CD4-positive, alpha-beta T cell (primary cell): ENCODE measurements at regions of chr17 and their contacts with region 1.

Region 1: GRCh38 chr17:67733371-67733940 is 15.7 kb downstream of the NOL11 start:
- DNase-seq: no peak
- ATAC-seq: no peak
- H3K4me3 ChIP-seq: no peak overlapping the region
- H3K4me3 Mint-ChIP-seq: peak overlapping the region; percentile 0
- H3K27ac ChIP-seq: no peak overlapping the region
- H3K27ac Mint-ChIP-seq: peak overlapping the region; percentile 12
- H3K4me1 ChIP-seq: peaks cover 7% of the 10 kb centered on the region
- H3K4me1 Mint-ChIP-seq: peaks cover 27% of the 10 kb centered on the region
- H3K27me3 ChIP-seq: no peaks in the 10 kb centered on the region
- H3K27me3 Mint-ChIP-seq: no peaks in the 10 kb centered on the region
- CTCF ChIP-seq: no peak

Region 2: GRCh38 chr17:67520252-67520906 is 213.1 kb before region 1 on chr17:
- CTCF ChIA-PET with region 1: no interaction called
- POLR2A ChIA-PET with region 1: no interaction called
- intact Hi-C with region 1: no loop called
- DNase-seq: peak in 2 of 14 experiments; percentile 32 to 40
- ATAC-seq: no peak
- H3K4me3 ChIP-seq: no peak overlapping the region
- H3K4me3 Mint-ChIP-seq: no peak overlapping the region
- H3K27ac ChIP-seq: peak overlapping the region in 1 of 2 donors; percentile 23
- H3K27ac Mint-ChIP-seq: peak overlapping the region; percentile 75
- H3K4me1 ChIP-seq: peaks cover 22% of the 10 kb centered on the region
- H3K4me1 Mint-ChIP-seq: peaks cover 72% of the 10 kb centered on the region
- H3K27me3 ChIP-seq: no peaks in the 10 kb centered on the region
- H3K27me3 Mint-ChIP-seq: no peaks in the 10 kb centered on the region
- CTCF ChIP-seq: no peak

Region 3: DNA sequence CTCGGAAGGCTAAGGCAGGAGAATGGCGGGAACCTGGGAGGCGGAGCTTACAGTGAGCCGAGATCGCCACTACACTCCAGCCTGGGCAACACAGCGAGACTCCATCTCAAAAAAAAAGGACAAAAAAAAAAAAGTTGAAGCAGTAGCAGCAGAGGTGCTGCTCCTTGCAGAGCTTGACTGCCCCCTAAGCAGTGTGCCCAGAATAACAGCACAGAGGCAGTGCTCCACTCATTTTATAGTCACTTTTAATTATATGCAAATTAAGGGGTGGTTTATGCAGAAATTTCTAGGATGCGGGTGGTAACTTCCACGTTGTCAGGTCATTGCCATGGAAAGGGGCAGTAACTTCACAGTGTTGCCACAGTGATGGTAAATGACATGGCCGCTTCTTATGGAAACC is 70.0 kb before region 1 on chr17:
- CTCF ChIA-PET with region 1: no interaction called
- POLR2A ChIA-PET with region 1: no interaction called
- intact Hi-C with region 1: no loop called
- DNase-seq: no peak
- ATAC-seq: no peak
- H3K4me3 ChIP-seq: no peak overlapping the region
- H3K4me3 Mint-ChIP-seq: no peak overlapping the region
- H3K27ac ChIP-seq: no peak overlapping the region
- H3K27ac Mint-ChIP-seq: no peak overlapping the region
- H3K4me1 ChIP-seq: no peaks in the 10 kb centered on the region
- H3K4me1 Mint-ChIP-seq: peaks cover 12% of the 10 kb centered on the region
- H3K27me3 ChIP-seq: no peaks in the 10 kb centered on the region
- H3K27me3 Mint-ChIP-seq: no peaks in the 10 kb centered on the region
- CTCF ChIP-seq: no peak

Region 4: GRCh38 chr17:67912656-67913055 is 179.2 kb after region 1 on chr17:
- CTCF ChIA-PET with region 1: no interaction called
- POLR2A ChIA-PET with region 1: no interaction called
- intact Hi-C with region 1: loop called in 1 of 2 experiments (anchors 10 kb)
- DNase-seq: no peak
- ATAC-seq: no peak
- H3K4me3 ChIP-seq: no peak overlapping the region
- H3K4me3 Mint-ChIP-seq: no peak overlapping the region
- H3K27ac ChIP-seq: no peak overlapping the region
- H3K27ac Mint-ChIP-seq: peak overlapping the region; percentile 38
- H3K4me1 ChIP-seq: no peaks in the 10 kb centered on the region
- H3K4me1 Mint-ChIP-seq: peaks cover 21% of the 10 kb centered on the region
- H3K27me3 ChIP-seq: no peaks in the 10 kb centered on the region
- H3K27me3 Mint-ChIP-seq: no peaks in the 10 kb centered on the region
- CTCF ChIP-seq: no peak

Region 5: DNA sequence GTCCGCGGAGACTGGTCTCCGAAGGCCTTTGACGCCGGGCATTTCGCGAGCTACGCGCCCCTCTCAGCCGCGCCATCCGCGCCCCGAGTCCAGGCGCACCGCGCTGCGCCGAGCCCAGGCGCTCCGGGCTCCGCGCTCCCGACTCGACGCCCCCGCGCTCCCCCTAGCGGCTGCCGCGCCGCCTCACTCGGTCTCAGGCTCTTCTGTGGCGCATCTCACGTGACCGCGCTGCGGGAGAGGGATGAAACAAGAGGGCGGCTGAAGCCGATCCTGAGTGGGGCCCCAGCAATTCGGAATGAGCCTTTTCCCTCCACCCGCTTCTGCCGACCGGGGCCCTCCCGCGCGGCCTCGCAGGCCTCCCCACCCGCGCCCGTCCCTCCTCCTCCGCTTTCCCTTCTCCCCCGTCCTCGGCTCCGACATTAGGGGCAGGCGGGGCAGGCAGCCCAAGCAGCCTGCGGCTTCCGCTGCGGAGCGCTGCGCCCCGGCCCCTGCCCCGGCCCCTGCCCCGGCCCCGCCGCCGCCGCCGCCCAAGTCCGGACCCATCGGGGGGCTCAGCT is 471.9 kb after region 1 on chr17:
- CTCF ChIA-PET with region 1: no interaction called
- POLR2A ChIA-PET with region 1: no interaction called
- intact Hi-C with region 1: no loop called
- DNase-seq: peak; percentile 82 to 96 (median 92)
- ATAC-seq: peak; percentile 73
- H3K4me3 ChIP-seq: peak overlapping the region; percentile 70
- H3K4me3 Mint-ChIP-seq: peak overlapping the region; percentile 94
- H3K27ac ChIP-seq: peak overlapping the region; percentile 58 to 76
- H3K27ac Mint-ChIP-seq: peak overlapping the region; percentile 84
- H3K4me1 ChIP-seq: peaks cover 33% of the 10 kb centered on the region
- H3K4me1 Mint-ChIP-seq: peaks cover 36% of the 10 kb centered on the region
- H3K27me3 ChIP-seq: no peaks in the 10 kb centered on the region
- H3K27me3 Mint-ChIP-seq: peaks cover 5% of the 10 kb centered on the region
- CTCF ChIP-seq: peak; percentile 87